Activated CD4-positive, alpha-beta memory T cell treated with anti-CD3 and anti-CD28 coated beads for 36 hours (primary cell): ENCODE measurements at regions of chr2 and their contacts with region 1.

Region 1: GRCh38 chr2:177263451-177264208 is 897 bp downstream of the NFE2L2 start:
- DNase-seq: peak; percentile 96
- H3K4me3 Mint-ChIP-seq: peak overlapping the region; percentile 86
- H3K27ac Mint-ChIP-seq: peak overlapping the region; percentile 99
- H3K4me1 Mint-ChIP-seq: peaks cover 52% of the 10 kb centered on the region
- H3K27me3 Mint-ChIP-seq: no peaks in the 10 kb centered on the region

Region 2: DNA sequence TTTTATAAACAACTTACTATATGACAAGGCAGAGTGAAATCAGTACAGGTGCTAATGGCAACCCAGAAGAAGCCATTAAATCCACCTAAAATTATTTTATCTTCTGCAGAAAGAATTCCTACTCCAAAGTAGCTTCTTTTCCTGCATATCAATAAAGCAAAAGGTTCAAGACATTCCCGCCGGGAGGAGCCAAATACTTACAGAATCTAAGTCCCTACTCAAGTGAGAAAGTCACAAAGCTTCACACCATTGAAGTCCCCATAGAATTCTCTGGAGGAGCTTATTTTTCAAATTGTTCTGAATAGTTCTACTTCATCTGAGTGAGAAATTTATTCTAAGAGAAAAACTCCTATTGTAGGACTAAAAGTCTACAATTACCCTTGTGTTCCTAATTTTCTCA is 284.7 kb before region 1 on chr2:
- CTCF ChIA-PET with region 1: no interaction called
- POLR2A ChIA-PET with region 1: no interaction called
- intact Hi-C with region 1: no loop called
- DNase-seq: no peak
- H3K4me3 Mint-ChIP-seq: no peak overlapping the region
- H3K27ac Mint-ChIP-seq: no peak overlapping the region
- H3K4me1 Mint-ChIP-seq: no peaks in the 10 kb centered on the region
- H3K27me3 Mint-ChIP-seq: peaks cover 6% of the 10 kb centered on the region

Region 3: GRCh38 chr2:177212106-177212890 is 51.3 kb before region 1 on chr2 and contains the start of gene HNRNPA3:
- CTCF ChIA-PET with region 1: interaction called, 25 read pairs
- POLR2A ChIA-PET with region 1: interaction called, 101 read pairs
- intact Hi-C with region 1: loop called (anchors 1 kb)
- DNase-seq: peak; percentile 100
- H3K4me3 Mint-ChIP-seq: peak within 1 kb of the TSS; percentile 97
- H3K27ac Mint-ChIP-seq: peak within 1 kb of the TSS; percentile 100
- H3K4me1 Mint-ChIP-seq: peaks cover 35% of the 10 kb centered on the region
- H3K27me3 Mint-ChIP-seq: no peaks in the 10 kb centered on the region
- total RNA-seq, gene HNRNPA3: 303 to 311 TPM

Region 4: GRCh38 chr2:177229448-177230242 is 34.0 kb before region 1 on chr2:
- CTCF ChIA-PET with region 1: interaction called, 37 read pairs
- POLR2A ChIA-PET with region 1: interaction called, 36 read pairs
- intact Hi-C with region 1: no loop called
- DNase-seq: no peak
- H3K4me3 Mint-ChIP-seq: no peak overlapping the region
- H3K27ac Mint-ChIP-seq: peak overlapping the region; percentile 77
- H3K4me1 Mint-ChIP-seq: peaks cover 55% of the 10 kb centered on the region
- H3K27me3 Mint-ChIP-seq: no peaks in the 10 kb centered on the region

Region 5: GRCh38 chr2:177289824-177290628 is 26.4 kb after region 1 on chr2:
- CTCF ChIA-PET with region 1: interaction called, 15 read pairs
- POLR2A ChIA-PET with region 1: interaction called, 27 read pairs
- intact Hi-C with region 1: loop called (anchors 1 kb)
- DNase-seq: peak; percentile 43
- H3K4me3 Mint-ChIP-seq: no peak overlapping the region
- H3K27ac Mint-ChIP-seq: peak overlapping the region; percentile 87
- H3K4me1 Mint-ChIP-seq: peaks cover 29% of the 10 kb centered on the region
- H3K27me3 Mint-ChIP-seq: no peaks in the 10 kb centered on the region

Region 6: DNA sequence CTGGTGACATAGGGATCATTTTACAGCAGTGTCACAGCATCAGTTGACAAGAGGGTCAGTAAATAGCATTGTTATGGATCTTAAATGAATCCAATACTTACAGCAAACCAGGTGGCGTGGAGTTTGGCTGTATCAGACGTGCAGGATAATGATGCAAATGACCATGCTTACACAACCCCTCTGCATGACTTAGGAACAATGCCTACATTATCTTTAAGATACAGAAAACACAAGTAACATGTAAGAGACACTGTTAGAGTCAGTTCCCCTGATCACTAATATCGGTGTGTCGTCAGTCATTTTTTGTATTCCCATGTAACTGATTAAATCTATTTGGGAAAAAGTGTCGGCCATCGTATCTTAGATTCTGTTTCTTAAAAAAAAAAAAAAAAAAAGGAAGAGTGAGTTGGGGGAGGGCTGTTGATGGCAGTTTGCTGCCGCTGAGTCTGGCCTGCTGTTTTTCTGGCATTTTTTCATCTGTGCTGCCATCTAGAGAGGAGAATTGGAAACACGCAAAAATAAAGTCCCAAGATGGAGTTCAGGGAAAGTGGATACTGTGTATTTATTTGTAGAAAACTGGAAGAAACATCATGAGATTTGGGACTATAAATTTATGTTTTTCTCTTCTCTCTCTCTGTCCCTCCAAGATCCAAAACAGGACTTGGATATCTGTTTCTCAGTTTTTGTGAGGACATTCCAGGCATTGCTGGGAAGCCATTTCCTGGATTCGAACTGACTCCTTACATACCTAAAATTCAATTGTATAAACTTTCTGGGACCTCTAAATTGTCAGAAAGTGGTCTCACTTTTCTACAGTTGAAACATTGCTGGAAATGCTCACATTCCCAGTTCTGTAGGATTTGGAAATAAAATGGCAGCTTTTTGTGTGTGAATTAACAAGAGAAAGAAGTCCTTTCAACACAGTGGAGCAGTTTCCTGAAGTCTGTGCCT is 68.7 kb after region 1 on chr2:
- CTCF ChIA-PET with region 1: interaction called, 21 read pairs
- POLR2A ChIA-PET with region 1: interaction called, 3 read pairs
- intact Hi-C with region 1: loop called (anchors 1 kb)
- DNase-seq: peak; percentile 37
- H3K4me3 Mint-ChIP-seq: no peak overlapping the region
- H3K27ac Mint-ChIP-seq: no peak overlapping the region
- H3K4me1 Mint-ChIP-seq: peaks cover 5% of the 10 kb centered on the region
- H3K27me3 Mint-ChIP-seq: no peaks in the 10 kb centered on the region

Region 7: GRCh38 chr2:177383935-177384334 is 120.3 kb after region 1 on chr2:
- CTCF ChIA-PET with region 1: no interaction called
- POLR2A ChIA-PET with region 1: no interaction called
- intact Hi-C with region 1: no loop called
- DNase-seq: no peak
- H3K4me3 Mint-ChIP-seq: no peak overlapping the region
- H3K27ac Mint-ChIP-seq: no peak overlapping the region
- H3K4me1 Mint-ChIP-seq: no peaks in the 10 kb centered on the region
- H3K27me3 Mint-ChIP-seq: no peaks in the 10 kb centered on the region

Region 8: DNA sequence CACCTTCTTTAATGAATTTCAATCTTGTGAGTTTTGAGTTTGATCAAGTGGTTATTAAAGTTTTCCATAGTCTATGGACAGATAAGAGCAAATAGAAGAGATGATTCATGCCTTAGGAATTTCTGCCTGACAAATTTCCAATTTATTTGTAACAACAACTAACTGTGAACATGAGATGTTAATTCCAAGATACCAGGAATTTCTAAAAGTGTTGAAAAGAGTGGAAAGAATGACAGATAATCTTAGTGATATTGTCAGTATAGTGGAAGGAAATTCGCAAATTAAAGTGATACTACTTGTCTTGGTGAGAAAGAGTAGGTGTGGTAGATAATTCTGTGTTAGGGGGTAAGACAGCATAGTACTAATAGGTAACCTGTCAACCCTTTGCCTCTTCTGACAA is 211.4 kb after region 1 on chr2:
- CTCF ChIA-PET with region 1: no interaction called
- POLR2A ChIA-PET with region 1: no interaction called
- intact Hi-C with region 1: no loop called
- DNase-seq: no peak
- H3K4me3 Mint-ChIP-seq: no peak overlapping the region
- H3K27ac Mint-ChIP-seq: peak overlapping the region; percentile 29
- H3K4me1 Mint-ChIP-seq: peaks cover 18% of the 10 kb centered on the region
- H3K27me3 Mint-ChIP-seq: no peaks in the 10 kb centered on the region

Region 9: DNA sequence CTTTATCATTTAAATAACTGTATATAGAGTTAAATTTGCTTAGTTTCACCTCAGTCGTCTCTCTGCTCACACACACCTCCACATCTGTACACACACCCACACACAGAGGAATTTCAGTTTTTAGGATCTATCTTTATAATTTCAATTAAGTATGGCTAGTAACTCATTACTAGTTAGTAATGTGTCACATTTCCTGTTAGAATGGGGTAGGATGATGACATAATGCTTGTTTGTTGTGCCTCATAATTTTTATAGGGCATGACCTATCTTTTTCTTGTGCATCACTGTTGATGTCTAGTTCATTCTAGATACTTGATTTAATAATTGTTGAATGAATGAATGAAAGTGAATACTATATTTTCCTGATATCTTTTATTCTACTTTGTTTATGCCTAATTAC is 237.6 kb after region 1 on chr2:
- CTCF ChIA-PET with region 1: no interaction called
- POLR2A ChIA-PET with region 1: no interaction called
- intact Hi-C with region 1: no loop called
- DNase-seq: no peak
- H3K4me3 Mint-ChIP-seq: no peak overlapping the region
- H3K27ac Mint-ChIP-seq: no peak overlapping the region
- H3K4me1 Mint-ChIP-seq: peaks cover 8% of the 10 kb centered on the region
- H3K27me3 Mint-ChIP-seq: no peaks in the 10 kb centered on the region

Region 10: GRCh38 chr2:177552422-177553175 is 289.0 kb after region 1 on chr2:
- CTCF ChIA-PET with region 1: no interaction called
- POLR2A ChIA-PET with region 1: no interaction called
- intact Hi-C with region 1: loop called (anchors 2 kb)
- DNase-seq: peak; percentile 93
- H3K4me3 Mint-ChIP-seq: peak overlapping the region; percentile 97
- H3K27ac Mint-ChIP-seq: peak overlapping the region; percentile 100
- H3K4me1 Mint-ChIP-seq: peaks cover 8% of the 10 kb centered on the region
- H3K27me3 Mint-ChIP-seq: no peaks in the 10 kb centered on the region